CD4-positive, alpha-beta memory T cell (primary cell): ENCODE measurements at regions of chr1 and their contacts with region 1.

Region 1: DNA sequence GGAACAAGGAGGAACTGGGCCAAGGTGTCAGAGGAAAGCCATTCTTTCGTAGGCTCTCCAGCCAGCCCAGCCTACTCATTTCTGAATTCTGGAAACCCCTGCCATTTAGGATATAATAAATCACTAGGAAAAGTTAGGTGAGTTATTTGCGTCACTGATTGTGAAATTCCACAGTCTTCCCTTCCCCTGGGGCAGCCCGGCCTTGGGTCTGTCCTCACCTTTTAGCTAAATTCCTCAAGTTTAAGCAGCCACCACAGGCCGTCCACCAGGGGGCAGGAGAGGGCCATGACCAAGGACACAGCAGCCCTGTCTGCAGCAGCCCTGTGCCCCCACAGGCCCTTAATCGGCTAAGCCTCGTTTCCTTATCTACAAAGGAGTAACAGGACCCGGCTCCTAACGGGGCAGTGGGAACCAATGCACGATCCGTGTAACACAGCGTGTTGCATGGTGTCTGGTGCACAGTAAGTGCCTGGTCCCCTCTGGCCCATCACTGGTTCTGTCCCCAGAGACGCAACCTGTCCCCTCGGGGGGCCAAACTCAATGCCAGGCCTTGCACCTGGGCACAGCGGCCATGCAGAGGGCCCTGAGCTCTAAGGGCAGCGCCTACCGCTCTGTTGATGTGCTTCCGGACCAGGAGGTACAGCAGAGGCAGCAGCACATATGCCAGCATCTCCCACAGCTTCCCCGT is 18.1 kb downstream of the GPR157 start:
- DNase-seq: peak; percentile 71 to 77 (median 74)
- H3K4me3 ChIP-seq: no peak overlapping the region
- H3K4me3 Mint-ChIP-seq: no peak overlapping the region
- H3K27ac ChIP-seq: no peak overlapping the region
- H3K27ac Mint-ChIP-seq: no peak overlapping the region
- H3K4me1 ChIP-seq: no peaks in the 10 kb centered on the region
- H3K4me1 Mint-ChIP-seq: peaks cover 0 to 4% (median 0%) of the 10 kb centered on the region in 4 donors
- H3K27me3 ChIP-seq: no peaks in the 10 kb centered on the region
- H3K27me3 Mint-ChIP-seq: no peaks in the 10 kb centered on the region

Region 2: GRCh38 chr1:9121496-9122409 is 10.9 kb after region 1 on chr1:
- CTCF ChIA-PET with region 1: interaction called, 11 read pairs
- POLR2A ChIA-PET with region 1: interaction called, 3 read pairs
- intact Hi-C with region 1: no loop called
- DNase-seq: peak; percentile 38 to 60 (median 48)
- H3K4me3 ChIP-seq: no peak overlapping the region
- H3K4me3 Mint-ChIP-seq: peak overlapping the region in 7 of 8 donors; percentile 29 to 79 (median 62)
- H3K27ac ChIP-seq: no peak overlapping the region
- H3K27ac Mint-ChIP-seq: peak overlapping the region in 5 of 7 donors; percentile 5 to 89 (median 71)
- H3K4me1 ChIP-seq: peaks cover 15% of the 10 kb centered on the region
- H3K4me1 Mint-ChIP-seq: peaks cover 9 to 16% (median 14%) of the 10 kb centered on the region in 4 donors
- H3K27me3 ChIP-seq: no peaks in the 10 kb centered on the region
- H3K27me3 Mint-ChIP-seq: no peaks in the 10 kb centered on the region

Region 3: DNA sequence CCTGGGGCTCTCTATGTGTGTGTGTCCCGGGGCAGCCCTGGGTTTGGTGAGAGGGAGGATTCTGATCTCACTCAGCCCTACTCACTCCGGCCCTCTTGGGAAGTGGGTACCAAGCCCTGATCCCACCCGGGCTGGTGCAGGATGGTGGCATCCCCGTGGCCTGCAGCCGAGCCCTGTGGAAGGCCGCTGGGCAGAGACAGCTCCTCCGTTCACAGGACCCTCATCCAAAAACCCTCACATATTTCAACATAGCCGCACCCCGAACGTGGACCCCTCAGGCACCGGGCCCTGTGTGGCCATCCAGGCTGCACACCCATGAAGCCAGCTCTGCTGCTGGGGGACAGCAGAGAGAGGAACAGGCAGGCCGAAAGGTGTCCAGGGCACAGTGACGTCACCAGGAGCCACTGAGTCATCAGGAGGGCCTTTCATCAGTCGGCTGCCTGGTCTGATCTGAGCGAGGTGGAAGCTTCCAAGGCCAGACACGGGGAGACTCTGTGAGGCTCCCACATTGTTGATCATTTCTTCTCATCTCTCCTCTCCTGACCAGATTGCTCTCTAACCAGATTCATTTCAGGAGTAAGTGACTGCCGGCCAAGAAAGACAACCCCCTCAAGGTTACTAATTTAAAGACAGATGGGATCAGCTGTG is 34.3 kb after region 1 on chr1:
- CTCF ChIA-PET with region 1: interaction called, 11 read pairs
- POLR2A ChIA-PET with region 1: no interaction called
- intact Hi-C with region 1: no loop called
- DNase-seq: no peak
- H3K4me3 ChIP-seq: no peak overlapping the region
- H3K4me3 Mint-ChIP-seq: no peak overlapping the region
- H3K27ac ChIP-seq: no peak overlapping the region
- H3K27ac Mint-ChIP-seq: no peak overlapping the region
- H3K4me1 ChIP-seq: no peaks in the 10 kb centered on the region
- H3K4me1 Mint-ChIP-seq: peaks cover 3 to 5% (median 4%) of the 10 kb centered on the region in 4 donors
- H3K27me3 ChIP-seq: no peaks in the 10 kb centered on the region
- H3K27me3 Mint-ChIP-seq: peaks cover 1 to 6% of the 10 kb centered on the region in 2 donors

Region 4: DNA sequence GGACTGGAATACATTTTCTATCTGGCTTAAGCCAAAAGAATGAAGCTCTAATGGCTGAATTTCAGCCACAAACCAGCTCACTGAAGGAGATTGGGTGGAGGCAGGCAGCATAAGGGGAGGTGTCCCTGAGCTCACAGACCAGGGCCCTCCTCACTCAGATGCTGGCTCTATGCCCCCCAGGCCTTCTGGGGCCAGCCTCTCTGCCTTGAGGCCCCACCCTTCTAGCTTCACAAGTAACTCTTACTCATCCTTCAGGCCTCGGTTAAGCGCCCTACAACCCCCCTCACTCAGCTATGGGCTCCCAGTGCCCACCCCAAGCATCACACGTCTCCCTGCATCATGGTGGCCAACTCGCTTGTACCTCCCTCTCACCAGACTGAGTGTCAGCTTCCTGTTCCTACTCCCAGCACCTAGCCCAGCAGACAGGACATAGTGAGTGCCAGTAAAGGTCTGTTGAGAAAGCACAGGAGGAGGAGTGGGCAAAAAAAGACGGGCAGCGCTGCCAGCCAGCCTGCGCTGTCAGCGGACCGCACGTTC is 58.9 kb after region 1 on chr1:
- CTCF ChIA-PET with region 1: no interaction called
- POLR2A ChIA-PET with region 1: no interaction called
- intact Hi-C with region 1: loop called (anchors 2 kb)
- DNase-seq: no peak
- H3K4me3 ChIP-seq: no peak overlapping the region
- H3K4me3 Mint-ChIP-seq: no peak overlapping the region
- H3K27ac ChIP-seq: no peak overlapping the region
- H3K27ac Mint-ChIP-seq: no peak overlapping the region
- H3K4me1 ChIP-seq: no peaks in the 10 kb centered on the region
- H3K4me1 Mint-ChIP-seq: no peaks in the 10 kb centered on the region
- H3K27me3 ChIP-seq: no peaks in the 10 kb centered on the region
- H3K27me3 Mint-ChIP-seq: peaks cover under 1 to 7% of the 10 kb centered on the region in 2 donors

Region 5: GRCh38 chr1:9196129-9197040 is 85.6 kb after region 1 on chr1:
- CTCF ChIA-PET with region 1: interaction called, 52 read pairs
- POLR2A ChIA-PET with region 1: interaction called, 6 read pairs
- intact Hi-C with region 1: no loop called
- DNase-seq: peak in 4 of 5 donors; percentile 30 to 46 (median 42)
- H3K4me3 ChIP-seq: no peak overlapping the region
- H3K4me3 Mint-ChIP-seq: peak overlapping the region in 1 of 8 donors; percentile 54
- H3K27ac ChIP-seq: no peak overlapping the region
- H3K27ac Mint-ChIP-seq: no peak overlapping the region
- H3K4me1 ChIP-seq: peaks cover 4% of the 10 kb centered on the region
- H3K4me1 Mint-ChIP-seq: peaks cover 8 to 17% (median 11%) of the 10 kb centered on the region in 4 donors
- H3K27me3 ChIP-seq: peaks cover 21% of the 10 kb centered on the region
- H3K27me3 Mint-ChIP-seq: peaks cover 41 to 47% of the 10 kb centered on the region in 2 donors

Region 6: GRCh38 chr1:10074059-10074851 is 963.4 kb after region 1 on chr1:
- CTCF ChIA-PET with region 1: no interaction called
- POLR2A ChIA-PET with region 1: no interaction called
- intact Hi-C with region 1: no loop called
- DNase-seq: peak in 3 of 5 donors; percentile 1 to 28 (median 3)
- H3K4me3 ChIP-seq: no peak overlapping the region
- H3K4me3 Mint-ChIP-seq: peak overlapping the region in 1 of 8 donors; percentile 33
- H3K27ac ChIP-seq: no peak overlapping the region
- H3K27ac Mint-ChIP-seq: peak overlapping the region in 3 of 7 donors; percentile 23 to 80 (median 63)
- H3K4me1 ChIP-seq: peaks cover 13% of the 10 kb centered on the region
- H3K4me1 Mint-ChIP-seq: peaks cover 14 to 23% (median 19%) of the 10 kb centered on the region in 4 donors
- H3K27me3 ChIP-seq: no peaks in the 10 kb centered on the region
- H3K27me3 Mint-ChIP-seq: no peaks in the 10 kb centered on the region